ENCODE measurements at regions of chr2 and their contacts with region 1.

Region 1: GRCh38 chr2:27754138-27754588 is 17.4 kb upstream of the MRPL33 start:
- DNase-seq: peak; percentile 83
- H3K4me3 ChIP-seq: peak overlapping the region in 1 of 2 experiments; percentile 13; a peak in 1 of 4 replicates
- H3K27ac ChIP-seq: no peak overlapping the region
- H3K4me1 ChIP-seq: no peaks in the 10 kb centered on the region
- H3K27me3 ChIP-seq: no peaks in the 10 kb centered on the region
- CTCF ChIP-seq: peak; percentile 98
- EP300 ChIP-seq: no peak
- RAD21 ChIP-seq: peak; percentile 100

Region 2: DNA sequence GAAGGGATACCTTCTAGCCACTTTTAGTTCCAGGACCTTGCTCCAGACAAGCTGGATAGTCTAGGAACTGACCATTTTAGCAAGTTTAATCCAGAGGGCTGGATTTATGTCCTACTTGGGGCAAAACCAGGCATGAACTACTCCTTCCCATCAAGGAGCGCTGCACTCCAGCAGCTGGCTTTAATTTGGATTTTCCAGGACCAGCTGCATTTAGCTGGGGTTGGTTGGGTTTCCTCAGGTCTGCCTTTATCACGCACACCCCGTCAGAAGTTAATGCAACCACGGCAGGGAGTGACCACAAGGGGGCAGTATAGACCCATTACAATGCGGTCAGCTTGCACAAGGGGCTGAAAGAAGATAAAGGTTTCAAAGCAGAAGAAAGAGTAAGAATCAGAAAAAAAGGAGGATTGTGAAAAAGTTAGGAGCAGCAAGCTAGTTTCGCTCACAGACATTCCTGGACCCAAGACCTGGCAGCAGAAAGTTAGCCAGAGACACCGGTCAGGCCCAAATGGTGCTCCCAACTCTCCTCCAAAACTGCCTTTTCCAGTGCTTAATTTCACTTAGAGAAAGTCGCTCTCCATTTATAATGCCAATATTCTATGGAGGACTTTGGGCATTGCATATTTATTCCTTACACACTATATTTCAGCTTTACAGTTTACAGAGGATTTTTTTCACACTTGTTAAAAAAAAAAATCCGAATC is 50.4 kb before region 1 on chr2:
- CTCF ChIA-PET with region 1: interaction called, 22 read pairs
- POLR2A ChIA-PET with region 1: no interaction called
- DNase-seq: peak; percentile 88
- H3K4me3 ChIP-seq: no peak overlapping the region; a peak in 1 of 4 replicates
- H3K27ac ChIP-seq: peak overlapping the region in 1 of 2 experiments; percentile 29; a peak in 1 of 4 replicates
- H3K4me1 ChIP-seq: peaks cover 10 to 16% of the 10 kb centered on the region in 2 experiments; a peak in 3 of 4 replicates
- H3K27me3 ChIP-seq: no peaks in the 10 kb centered on the region
- CTCF ChIP-seq: peak; percentile 99
- EP300 ChIP-seq: peak in 1 of 2 experiments; percentile 48; a peak in 1 of 4 replicates
- RAD21 ChIP-seq: peak; percentile 98

Region 3: DNA sequence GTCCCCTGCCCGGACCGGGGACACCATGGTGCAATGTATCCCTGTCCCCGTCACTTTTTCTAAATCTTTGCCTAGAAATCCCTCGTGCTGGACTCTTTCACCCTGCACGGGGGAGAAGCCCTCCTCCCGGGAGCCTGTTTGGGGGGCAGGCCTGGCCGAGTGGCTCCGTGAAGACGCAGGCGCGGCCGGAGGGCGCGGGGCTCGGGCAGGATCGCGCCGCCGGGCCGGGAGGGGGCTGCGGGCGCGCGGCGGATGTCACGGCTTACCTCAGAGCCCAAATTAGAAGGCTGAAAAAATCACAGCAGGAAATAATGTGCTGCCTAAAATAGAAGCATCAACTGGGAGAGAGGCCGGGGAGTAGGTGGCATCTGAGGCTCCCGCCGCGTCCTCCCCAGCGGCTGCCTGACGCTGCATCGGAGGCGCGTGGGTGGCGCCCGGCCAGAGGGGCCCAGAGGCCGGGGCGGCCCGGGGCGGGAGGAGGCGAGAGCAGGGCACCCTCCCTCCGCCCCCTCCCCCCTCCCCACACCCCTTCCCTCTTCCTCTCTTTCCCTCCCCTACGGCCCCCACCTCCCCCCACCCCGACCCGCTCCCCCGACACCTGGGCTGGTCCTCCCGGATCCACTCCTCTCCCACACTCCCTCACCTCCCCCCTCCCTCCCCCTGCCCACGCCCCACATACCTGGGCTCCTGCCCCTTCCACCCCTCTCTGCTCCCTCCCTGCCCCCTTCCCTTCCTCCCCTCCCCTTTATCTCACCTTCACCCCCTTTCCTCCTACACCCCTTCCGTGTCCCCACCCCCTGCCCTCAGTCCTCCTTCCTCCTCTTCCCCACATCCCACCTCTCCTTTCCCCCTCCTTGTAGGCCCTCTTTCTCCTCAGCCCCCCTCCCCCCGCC is 38.6 kb before region 1 on chr2:
- CTCF ChIA-PET with region 1: interaction called, 10 read pairs
- POLR2A ChIA-PET with region 1: no interaction called
- DNase-seq: peak; percentile 93
- H3K4me3 ChIP-seq: peak overlapping the region; percentile 51 to 58
- H3K27ac ChIP-seq: peak overlapping the region; percentile 3 to 60; a peak in 3 of 4 replicates
- H3K4me1 ChIP-seq: peaks cover 9 to 11% of the 10 kb centered on the region in 2 experiments; a peak in 3 of 4 replicates
- H3K27me3 ChIP-seq: no peaks in the 10 kb centered on the region
- CTCF ChIP-seq: no peak
- EP300 ChIP-seq: 0 out of 4 replicates have a peak, but pooled peaks of 1 of the 2 experiments have one; percentile 17
- RAD21 ChIP-seq: no peak

Region 4: DNA sequence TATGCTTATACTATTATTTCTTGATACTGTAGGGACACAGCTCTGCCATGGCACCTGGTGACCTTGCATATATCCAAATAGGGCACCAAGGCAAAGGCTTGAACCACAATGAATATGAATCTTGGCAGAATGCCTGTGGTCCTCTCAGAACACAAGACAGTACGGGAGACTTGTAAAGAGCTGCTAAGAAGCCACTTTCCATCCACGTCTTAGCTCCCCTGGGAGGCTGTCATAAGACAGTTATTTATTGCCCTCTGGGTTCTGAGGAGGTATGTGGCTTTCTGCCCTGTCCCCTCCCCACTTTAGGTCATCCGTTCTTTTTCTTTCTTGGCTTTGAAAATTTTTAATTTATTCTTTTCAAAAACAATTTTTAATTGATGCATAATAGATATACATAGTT is 12.5 kb before region 1 on chr2:
- CTCF ChIA-PET with region 1: interaction called, 28 read pairs
- POLR2A ChIA-PET with region 1: no interaction called
- DNase-seq: no peak
- H3K4me3 ChIP-seq: no peak overlapping the region
- H3K27ac ChIP-seq: no peak overlapping the region
- H3K4me1 ChIP-seq: peaks cover 0 to 18% of the 10 kb centered on the region in 2 experiments; a peak in 2 of 4 replicates
- H3K27me3 ChIP-seq: no peaks in the 10 kb centered on the region
- CTCF ChIP-seq: no peak
- EP300 ChIP-seq: no peak
- RAD21 ChIP-seq: no peak

Region 5: GRCh38 chr2:27771548-27772335 is 17.6 kb after region 1 on chr2 and contains the start of gene MRPL33:
- CTCF ChIA-PET with region 1: interaction called, 23 read pairs
- POLR2A ChIA-PET with region 1: interaction called, 3 read pairs
- DNase-seq: peak; percentile 99
- H3K4me3 ChIP-seq: peak within 1 kb of the TSS; percentile 78 to 98
- H3K27ac ChIP-seq: peak within 1 kb of the TSS; percentile 77 to 99
- H3K4me1 ChIP-seq: peaks cover 0 to 22% of the 10 kb centered on the region in 2 experiments; a peak in 3 of 4 replicates
- H3K27me3 ChIP-seq: no peaks in the 10 kb centered on the region
- CTCF ChIP-seq: no peak
- EP300 ChIP-seq: peak; percentile 4 to 28; a peak in 2 of 4 replicates
- RAD21 ChIP-seq: peak; percentile 17; the same call in 1 of the 2 replicates
- polyA plus RNA-seq, gene MRPL33: 132 and 153 TPM in 2 replicates

Region 6: DNA sequence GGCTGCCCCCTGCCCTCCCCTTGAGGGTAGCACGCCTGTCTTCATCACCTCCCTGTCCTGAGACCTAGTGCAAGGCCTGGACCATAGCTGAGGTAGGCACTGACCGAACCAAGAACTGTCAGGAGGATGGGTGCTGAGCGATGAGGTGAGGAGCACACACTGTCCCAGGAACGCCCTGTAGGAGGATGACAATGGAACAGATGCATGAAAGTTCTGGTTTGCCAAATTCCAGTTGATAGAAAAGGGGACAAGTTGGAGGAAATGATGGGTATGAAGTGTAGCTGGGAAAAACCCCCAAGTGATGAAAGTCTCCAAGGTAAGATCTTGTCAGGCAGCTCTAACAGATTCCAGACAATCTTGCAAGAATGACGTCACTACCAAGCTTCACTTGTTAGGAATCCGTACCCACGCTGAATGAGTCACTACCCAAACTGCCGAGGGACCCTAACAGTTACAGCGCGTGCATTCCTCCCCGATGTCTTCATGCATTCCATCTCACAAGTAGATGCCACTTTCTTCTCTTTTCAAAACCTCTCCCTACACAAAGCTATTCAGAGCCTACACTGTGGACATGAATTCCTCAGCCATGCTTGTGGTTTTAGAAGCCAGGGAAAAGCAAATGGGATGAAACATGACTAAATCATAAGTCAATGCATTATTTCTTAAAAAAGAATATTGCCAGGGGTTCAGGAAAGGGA is 44.9 kb after region 1 on chr2:
- CTCF ChIA-PET with region 1: no interaction called
- POLR2A ChIA-PET with region 1: no interaction called
- DNase-seq: no peak
- H3K4me3 ChIP-seq: 0 out of 4 replicates have a peak overlapping the region, but pooled peaks of 1 of the 2 experiments have one; percentile 0
- H3K27ac ChIP-seq: peak overlapping the region; percentile 65 to 98; a peak in 3 of 4 replicates
- H3K4me1 ChIP-seq: peaks cover 0 to 49% of the 10 kb centered on the region in 2 experiments; a peak in 3 of 4 replicates
- H3K27me3 ChIP-seq: no peaks in the 10 kb centered on the region
- CTCF ChIP-seq: no peak
- EP300 ChIP-seq: peak; percentile 63 to 100
- RAD21 ChIP-seq: peak; percentile 2; the same call in 1 of the 2 replicates

Region 7: DNA sequence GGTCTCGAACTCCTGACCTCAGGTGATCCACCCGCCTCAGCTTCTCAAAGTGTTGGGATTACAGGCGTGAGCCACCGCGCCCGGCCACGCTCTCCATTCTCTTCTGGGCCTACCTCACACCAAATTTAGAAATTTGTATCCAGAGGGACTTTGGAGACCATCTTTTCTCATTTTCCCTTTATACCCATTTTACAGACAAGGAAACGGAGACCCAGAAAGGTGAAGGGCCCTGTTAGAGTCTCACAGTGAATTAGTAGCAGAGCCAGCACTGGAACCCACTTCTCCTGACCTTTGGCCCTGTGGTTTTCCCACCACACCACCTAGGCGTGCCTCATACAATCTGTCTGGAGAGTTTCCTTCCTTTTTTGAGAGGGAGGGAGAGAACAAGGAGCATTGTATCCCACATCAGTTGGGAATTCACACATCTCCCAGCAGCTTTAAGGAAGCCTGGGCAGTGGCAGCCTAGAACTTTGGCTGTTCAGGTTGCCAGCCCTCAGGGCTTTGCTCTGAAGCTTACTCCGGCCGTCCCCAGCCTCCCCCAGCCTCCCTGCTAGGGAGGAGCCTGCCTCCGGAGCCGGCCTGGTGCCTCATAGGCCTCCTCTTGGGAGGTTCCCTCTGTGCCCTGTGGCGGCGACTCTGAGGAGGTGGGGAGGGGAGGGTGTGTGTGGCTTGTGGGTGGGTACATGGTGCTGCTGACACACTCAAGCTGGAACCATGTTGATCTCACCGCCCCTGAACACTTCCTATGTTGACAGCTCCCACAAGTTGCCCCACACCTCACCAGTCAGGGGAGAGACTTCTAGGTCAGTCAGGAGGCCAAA is 652.3 kb after region 1 on chr2:
- CTCF ChIA-PET with region 1: interaction called, 53 read pairs
- POLR2A ChIA-PET with region 1: no interaction called
- DNase-seq: no peak
- H3K4me3 ChIP-seq: no peak overlapping the region
- H3K27ac ChIP-seq: no peak overlapping the region
- H3K4me1 ChIP-seq: peaks cover 6 to 9% of the 10 kb centered on the region in 2 experiments; a peak in 2 of 4 replicates
- H3K27me3 ChIP-seq: no peaks in the 10 kb centered on the region
- CTCF ChIP-seq: no peak
- EP300 ChIP-seq: no peak
- RAD21 ChIP-seq: no peak

Measured in SK-N-SH (cell line).